Tibial artery (tissue), 4 donors: ENCODE measurements at regions of chr12 and their contacts with region 1.

Region 1: DNA sequence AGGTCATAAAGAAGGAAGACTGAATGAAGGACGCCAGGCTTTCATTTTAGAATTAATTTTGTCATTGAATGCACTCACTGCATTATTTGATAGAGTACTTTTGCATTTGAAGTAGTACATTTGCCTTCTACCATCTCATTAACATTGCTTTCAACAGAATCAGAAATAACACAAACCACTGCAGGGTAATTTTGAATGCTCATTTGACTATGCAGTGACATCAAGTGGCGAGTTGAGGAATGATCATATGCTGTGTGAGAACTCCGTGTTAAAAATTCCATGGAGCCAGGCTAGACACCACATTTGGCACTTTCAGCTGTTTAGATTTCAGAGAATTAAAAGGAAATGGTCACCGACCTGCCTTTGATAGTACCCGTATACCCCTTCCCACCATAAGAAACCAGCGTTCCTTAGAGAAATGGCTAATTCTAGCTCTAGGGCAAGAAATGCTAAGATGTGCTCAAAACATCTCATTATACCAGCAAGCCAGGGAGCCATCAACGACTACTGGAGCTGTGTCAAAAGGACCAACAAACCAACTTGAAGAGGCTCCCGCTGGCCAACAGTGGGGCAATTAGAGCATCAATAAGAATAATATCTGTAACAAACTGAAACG is 16.5 kb downstream of the HEBP1 start:
- DNase-seq: no peak
- H3K4me3 ChIP-seq: no peak overlapping the region
- H3K27ac ChIP-seq: no peak overlapping the region
- H3K4me1 ChIP-seq: peaks cover 0 to 14% (median 7%) of the 10 kb centered on the region in 4 donors
- H3K27me3 ChIP-seq: no peaks in the 10 kb centered on the region
- CTCF ChIP-seq: peak; percentile 63 to 69

Region 2: DNA sequence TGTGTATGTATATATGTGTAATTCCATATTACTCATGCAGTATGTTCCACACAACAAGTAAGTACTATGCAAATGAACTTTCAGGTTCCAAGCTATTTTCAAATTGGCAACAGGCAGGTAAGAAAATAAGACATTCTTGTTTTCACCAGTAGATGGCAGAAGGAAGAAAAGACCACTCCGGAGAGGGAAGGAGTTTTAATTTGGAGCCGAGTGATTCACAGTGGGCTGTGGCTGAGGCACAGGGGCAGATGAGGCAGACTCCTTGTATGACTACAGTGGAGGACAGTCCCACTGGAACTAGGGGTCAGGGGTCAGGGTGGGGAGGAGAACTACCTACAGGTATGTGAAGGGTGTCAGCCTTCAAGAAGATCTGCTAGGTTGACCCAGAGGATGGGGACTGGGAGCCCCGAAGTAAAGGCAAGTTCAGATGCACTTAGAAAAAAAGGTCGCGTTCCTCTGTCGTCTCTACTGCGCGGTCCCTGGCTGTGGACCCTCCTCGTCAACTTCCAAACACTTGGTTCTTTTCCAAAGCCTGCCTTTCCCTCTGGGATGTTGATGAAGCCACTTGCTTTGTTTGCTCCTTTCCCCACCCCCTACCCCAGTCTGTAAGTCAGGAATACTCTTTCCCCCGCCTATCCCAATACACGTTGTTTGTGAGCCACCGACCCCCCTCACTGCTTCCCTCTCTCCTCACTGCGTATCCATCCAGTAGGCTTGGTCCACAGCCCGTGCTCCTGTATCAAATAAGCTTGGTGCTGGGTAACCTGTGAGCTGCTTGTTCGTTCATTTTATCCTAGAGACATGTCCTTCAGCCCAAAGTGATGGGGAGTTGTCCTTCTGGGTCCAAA is 146.3 kb before region 1 on chr12:
- intact Hi-C with region 1: loop called (anchors 2 kb)
- DNase-seq: peak in 1 of 2 donors; percentile 72
- H3K4me3 ChIP-seq: no peak overlapping the region
- H3K27ac ChIP-seq: no peak overlapping the region
- H3K4me1 ChIP-seq: peaks cover 0 to 10% (median 0%) of the 10 kb centered on the region in 4 donors
- H3K27me3 ChIP-seq: no peaks in the 10 kb centered on the region
- CTCF ChIP-seq: peak; percentile 54 to 71

Region 3: DNA sequence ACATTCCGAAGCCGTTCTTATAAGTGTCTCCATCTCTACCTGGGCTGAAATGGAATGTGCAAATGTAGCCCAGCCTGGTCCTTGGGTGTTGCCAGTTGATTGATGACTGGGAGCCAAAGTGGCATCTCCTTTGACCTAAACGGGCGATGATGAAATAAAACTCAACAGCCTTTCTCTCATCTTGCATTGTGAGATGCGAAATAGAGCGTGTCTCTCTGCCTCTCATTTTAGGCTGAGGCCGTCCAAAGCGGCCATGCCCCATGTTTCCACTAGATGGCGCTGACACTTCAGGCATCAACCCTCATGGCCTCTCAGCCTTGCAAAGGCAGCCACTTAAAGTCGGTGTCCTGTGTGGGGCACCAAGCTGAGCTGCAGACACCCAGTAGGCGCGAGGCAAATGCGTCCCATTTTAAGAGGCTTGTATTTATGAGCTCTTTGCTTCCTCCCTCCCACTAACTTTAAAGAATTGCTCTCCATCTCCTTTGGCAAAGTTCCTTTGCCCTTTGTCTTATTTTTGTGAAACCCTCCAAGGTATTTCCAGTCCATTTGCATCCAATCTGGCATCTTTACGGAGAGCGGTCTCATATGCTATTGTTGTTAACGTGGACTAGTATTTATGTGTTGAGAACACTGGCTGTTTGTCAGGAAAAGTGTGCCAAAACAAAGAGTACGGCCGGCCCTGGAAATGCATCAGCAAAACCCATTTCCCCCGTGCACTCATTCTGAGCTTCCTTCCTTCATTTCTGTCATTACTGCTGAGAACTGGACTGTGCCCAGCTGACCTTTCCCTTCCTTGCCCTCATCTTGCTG is 67.2 kb before region 1 on chr12:
- intact Hi-C with region 1: loop called (anchors 5 kb)
- DNase-seq: peak; percentile 91 to 92
- H3K4me3 ChIP-seq: peak overlapping the region in 1 of 2 donors; percentile 10
- H3K27ac ChIP-seq: peak overlapping the region; percentile 44 to 57
- H3K4me1 ChIP-seq: peaks cover 0 to 13% (median 7%) of the 10 kb centered on the region in 4 donors
- H3K27me3 ChIP-seq: no peaks in the 10 kb centered on the region
- CTCF ChIP-seq: peak; percentile 95 to 98

Region 4: GRCh38 chr12:13425766-13426165 is 442.2 kb after region 1 on chr12:
- intact Hi-C with region 1: no loop called
- DNase-seq: no peak
- H3K4me3 ChIP-seq: no peak overlapping the region
- H3K27ac ChIP-seq: no peak overlapping the region
- H3K4me1 ChIP-seq: no peaks in the 10 kb centered on the region
- H3K27me3 ChIP-seq: no peaks in the 10 kb centered on the region
- CTCF ChIP-seq: no peak